ENCODE measurements at regions of chr1 and their contacts with region 1.

Region 1: DNA sequence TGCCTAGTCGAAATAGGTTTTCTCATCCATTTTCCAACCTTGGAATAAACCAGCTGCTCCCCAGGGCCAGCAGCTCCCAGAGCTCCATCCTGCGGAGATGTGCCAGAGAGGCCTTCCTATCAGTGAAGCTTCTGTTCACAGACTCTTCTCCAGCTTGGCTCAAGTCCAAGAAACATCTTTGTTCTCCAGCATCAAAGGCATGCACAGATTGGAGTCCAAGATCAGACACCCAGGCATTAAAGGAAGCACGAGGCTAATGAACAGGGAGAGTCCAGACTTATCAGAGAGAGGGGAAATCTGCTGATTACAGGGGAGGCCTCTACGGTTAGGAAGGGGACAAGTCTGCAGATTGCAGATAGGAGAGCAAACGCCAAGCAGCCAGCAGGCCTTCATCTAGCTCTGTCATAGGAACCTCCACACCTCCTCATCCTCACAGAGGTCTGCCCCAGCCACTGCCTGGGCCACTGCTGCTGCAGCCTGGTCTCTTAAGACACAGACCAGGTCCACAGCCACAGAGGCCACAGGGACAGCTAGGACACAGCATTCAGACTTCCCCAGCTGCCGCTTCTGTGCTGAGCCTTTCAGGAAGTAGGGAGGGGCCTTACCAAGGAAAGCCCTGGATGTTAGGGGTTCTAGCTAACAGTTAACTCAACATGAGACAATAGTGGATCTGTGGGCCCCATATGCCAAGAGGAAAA is 3.4 kb downstream of the PRR9 start:
- DNase-seq: no peak
- ATAC-seq: no peak
- H3K4me3 Mint-ChIP-seq: no peak overlapping the region
- H3K27ac Mint-ChIP-seq: no peak overlapping the region
- H3K4me1 Mint-ChIP-seq: no peaks in the 10 kb centered on the region
- H3K27me3 Mint-ChIP-seq: peaks cover 12% of the 10 kb centered on the region

Region 2: DNA sequence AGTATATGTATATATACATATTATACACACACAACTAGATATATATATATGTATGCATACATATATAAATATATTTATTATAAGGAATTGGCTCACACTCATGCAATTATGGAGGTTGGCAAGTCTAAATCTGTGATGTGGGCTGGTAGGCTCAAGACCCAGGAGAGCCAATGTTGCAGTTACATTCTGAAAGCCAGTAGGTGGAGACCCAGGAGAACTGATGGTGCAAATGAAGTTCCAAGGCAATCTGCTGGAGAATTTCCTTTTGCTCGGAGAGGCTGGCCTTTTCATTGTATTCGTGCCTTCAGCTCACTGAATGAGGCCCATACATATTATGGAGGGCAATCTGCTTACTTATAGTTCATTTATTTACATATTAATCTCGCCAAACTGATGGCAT is 303.0 kb before region 1 on chr1:
- CTCF ChIA-PET with region 1: no interaction called
- POLR2A ChIA-PET with region 1: no interaction called
- intact Hi-C with region 1: loop called in 1 of 2 experiments (anchors 10 kb)
- DNase-seq: no peak
- ATAC-seq: no peak
- H3K4me3 Mint-ChIP-seq: no peak overlapping the region
- H3K27ac Mint-ChIP-seq: no peak overlapping the region
- H3K4me1 Mint-ChIP-seq: no peaks in the 10 kb centered on the region
- H3K27me3 Mint-ChIP-seq: peaks cover 22% of the 10 kb centered on the region

Measured in activated CD4-positive, alpha-beta T cell treated with anti-CD3 and anti-CD28 coated beads for 36 hours (primary cell).